ENCODE measurements at regions of chr14 and their contacts with region 1.

Region 1: GRCh38 chr14:63852817-63853731 is at the start of gene SYNE2:
- DNase-seq: peak; percentile 88
- ATAC-seq: peak; percentile 95
- total RNA-seq, gene SYNE2: 191 TPM

Region 2: DNA sequence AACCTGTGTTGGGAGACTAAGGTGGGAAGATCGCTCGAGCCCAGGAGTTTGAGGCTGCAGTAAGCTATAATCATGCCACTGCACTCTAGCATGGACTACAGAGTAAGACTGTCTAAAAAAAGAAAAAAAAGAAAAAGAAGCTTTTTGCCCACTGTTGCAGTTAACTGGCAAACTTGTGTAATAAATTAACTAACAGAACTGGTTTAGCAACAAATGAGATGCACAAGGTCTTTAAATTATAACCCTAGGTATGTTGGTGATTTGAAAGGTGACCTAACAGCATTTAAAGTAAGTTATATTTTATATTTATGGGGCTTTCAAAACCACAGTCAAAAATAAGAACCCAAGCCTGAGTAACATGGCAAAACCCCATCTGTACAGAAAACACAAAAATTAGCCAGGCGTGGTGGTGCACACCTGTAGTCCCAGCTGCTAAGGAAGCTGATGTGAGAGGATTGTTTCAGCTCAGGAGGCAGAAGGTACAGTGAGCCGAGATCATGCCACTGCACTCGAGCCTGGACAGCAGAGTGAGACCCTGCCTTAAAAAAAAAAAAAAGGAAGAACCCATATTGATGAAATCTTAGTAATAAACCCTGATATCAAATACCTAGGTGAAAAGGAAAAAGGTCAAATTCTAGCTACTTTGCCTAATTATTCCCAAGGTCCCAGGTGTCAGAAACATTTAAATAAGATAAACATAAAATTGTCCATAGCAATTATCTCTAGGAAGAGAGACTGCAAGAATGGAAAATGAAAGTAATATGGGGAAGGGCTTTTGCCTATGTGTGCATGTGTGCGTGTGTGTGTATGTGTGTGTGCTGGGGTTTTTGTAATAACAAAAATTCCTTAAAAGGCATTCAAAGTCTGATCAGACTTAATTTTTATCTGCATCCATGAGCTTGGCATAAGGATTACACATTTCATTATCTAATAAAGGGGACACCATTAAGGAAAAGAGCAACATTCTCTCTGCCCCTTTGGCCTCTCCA is 15.2 kb after region 1 on chr14:
- intact Hi-C with region 1: loop called (anchors 2 kb)
- DNase-seq: no peak
- ATAC-seq: no peak

Region 3: DNA sequence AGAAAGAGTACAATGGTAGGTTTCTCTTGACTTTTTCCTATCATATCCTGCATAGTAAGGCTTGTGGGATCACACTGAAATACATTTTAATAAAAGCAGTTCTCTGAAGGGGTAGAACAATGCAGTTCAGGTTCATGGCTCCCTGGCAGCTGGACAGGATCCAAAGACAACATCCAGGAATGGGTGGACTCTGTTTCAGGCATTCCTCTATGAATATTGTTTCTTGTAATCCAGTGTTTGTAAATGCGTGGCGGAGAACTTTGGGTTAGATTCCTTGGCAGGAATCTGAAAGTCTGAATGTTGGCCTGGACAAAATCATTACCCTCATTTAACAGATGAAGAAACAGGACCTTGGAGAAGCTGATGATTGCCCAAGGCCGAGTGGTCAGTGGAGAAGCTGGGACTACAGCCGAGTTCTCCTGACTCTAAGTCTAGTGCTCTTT is 43.2 kb after region 1 on chr14:
- intact Hi-C with region 1: loop called (anchors 2 kb)
- DNase-seq: no peak
- ATAC-seq: peak; percentile 35

Region 4: GRCh38 chr14:63952933-63953437 is 99.9 kb after region 1 on chr14:
- intact Hi-C with region 1: loop called (anchors 1 kb)
- DNase-seq: no peak
- ATAC-seq: no peak

Region 5: DNA sequence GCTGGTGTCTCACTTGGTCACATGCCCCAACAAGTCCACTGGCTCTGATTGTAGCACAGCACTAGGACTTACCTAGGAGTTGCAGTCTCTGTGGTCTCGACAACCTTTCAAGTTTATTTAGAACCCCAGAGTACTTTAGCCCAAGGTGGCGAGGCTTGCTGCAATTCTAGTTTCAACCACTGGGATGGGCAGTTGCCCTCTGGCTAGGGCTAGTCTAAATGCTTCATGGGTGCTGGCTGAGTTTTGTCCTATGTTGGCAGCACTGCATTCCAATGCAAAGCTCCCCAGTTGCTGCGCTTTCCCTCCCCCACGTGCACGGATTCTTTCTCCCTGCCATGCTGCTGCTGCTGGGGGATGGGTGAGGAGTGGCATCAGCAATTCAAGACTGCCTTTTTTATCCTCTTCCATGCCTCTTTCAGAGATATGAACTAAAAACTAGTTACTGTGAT is 207.6 kb after region 1 on chr14:
- intact Hi-C with region 1: no loop called
- DNase-seq: no peak
- ATAC-seq: no peak

Region 6: DNA sequence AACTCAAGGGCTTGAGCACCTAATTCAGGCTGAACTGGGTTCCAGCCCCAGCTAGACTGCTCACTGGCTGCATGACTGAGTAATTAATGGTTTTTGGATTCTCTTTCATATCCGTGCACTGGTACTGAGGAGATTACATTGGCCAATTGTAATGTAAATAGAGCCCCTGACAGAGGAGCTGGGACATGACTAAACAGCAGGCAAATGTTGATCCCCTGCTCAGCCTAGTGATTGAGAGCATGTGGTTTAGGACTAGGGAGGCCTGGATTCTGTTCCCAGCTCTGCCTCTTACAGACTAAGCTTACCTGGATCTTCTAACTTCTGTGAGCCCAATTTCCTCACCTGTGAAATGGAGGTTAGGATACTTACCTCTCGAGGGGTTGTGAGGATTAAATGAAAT is 236.8 kb after region 1 on chr14:
- intact Hi-C with region 1: no loop called
- DNase-seq: no peak
- ATAC-seq: no peak

Measured in Right ventricle myocardium inferior (tissue), 1 donor.